GM10248 (cell line): ENCODE measurements at regions of chr11 and their contacts with region 1.

Region 1: DNA sequence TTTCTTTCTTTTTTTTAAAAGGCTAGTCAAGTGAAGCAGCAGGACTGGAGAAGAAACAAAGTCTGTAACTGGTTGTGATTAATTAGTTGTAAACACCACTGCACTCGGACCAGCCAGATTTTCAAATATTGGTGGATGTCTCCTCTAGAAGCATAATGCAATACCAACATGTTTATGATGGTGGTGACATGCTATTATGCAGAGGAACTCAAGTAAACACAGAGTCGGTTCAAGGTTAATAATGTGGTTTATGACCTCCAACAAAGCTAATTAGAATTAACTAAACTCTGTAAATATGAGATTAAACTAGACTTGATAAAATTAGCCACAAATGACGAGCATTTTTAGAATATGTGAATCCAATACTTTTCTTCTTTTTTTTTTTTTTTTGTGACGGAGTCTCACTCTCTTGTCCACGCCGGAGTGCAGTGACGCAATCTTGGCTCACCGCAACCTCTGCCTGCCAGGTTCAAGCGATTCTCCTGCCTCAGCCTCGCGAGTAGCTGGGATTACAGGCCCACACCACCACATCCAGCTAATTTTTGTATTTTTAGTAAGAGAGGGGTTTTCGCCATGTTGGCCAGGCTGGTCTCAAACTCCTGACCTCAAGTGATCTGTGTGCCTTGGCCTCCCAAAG is 11.8 kb upstream of the AGBL2 start:
- DNase-seq: no peak
- CTCF ChIP-seq: no peak

Region 2: DNA sequence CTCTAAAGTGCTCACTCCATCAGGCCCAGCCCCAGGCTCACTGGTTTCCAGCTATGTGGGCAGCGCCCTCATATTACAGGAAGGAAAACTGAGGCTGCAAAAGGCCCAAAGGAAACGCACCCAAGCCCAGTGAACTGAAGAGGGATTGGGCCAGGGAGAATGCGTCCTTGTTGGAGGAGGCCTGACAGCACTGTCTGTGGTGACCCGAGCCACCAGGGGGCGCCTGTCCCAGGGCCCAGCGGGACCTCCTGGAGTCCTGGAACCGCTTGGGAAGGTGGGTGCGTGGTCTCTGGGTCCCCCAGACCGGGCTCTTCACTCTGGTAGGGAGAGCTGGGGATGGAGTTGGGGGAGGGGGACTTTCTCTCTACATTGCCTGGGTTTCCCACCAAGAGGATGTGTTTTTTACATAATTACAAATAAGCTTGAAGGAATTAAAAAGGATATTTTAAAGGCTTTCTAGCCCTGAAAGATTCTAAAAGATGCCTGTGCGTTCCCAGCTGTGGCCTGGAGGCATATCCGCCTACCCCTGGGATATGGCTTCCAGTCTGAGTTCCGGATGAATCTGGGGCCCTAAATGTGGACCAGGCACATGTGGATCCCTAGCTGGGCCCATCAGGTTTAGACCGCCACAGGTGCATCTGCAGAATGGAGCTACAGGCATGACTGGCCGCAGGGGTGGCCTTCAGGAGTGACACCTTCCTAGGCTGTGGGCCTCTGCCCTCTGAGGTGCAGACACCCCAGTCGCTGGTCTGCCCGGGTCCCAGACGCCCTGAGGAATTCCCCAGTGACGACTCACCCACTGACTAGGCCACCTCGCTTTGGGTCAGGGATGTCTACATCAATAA is 352.9 kb before region 1 on chr11:
- CTCF ChIA-PET with region 1: no interaction called
- POLR2A ChIA-PET with region 1: no interaction called
- DNase-seq: peak; percentile 84
- CTCF ChIP-seq: peak; percentile 98

Region 3: GRCh38 chr11:47578524-47579460 is 148.2 kb before region 1 on chr11 and contains the starts of genes KBTBD4 and NDUFS3:
- CTCF ChIA-PET with region 1: no interaction called
- POLR2A ChIA-PET with region 1: no interaction called
- DNase-seq: peak; percentile 93
- CTCF ChIP-seq: no peak

Region 4: DNA sequence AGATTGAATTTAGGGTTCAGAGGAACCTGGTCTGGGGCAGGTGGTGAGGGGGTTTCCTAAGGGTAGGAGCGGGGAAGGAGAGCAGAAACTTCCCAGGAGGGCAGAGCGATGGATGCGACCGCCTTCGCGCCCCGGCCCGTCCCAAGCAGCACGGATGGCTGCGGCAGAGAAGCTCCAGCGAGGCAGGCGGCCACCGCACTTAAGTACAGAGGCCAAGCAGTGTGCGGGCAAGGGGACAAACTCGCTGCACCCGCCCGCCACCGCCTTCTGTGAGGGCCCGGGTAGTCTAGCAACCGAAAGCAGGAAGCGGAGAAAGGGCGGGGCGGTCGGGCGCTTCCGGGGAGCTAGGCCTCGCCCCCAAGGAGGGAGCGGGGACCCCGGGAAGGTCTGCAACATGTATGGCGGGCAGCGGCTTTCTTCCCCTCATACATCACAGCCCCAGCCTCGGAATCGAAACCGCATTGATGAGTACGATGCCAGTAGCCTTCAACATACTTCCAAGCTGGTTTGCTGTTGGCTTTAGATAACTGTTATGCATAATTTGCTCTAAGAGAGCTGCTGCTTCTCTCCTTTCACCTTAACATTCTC is 11.8 kb before region 1 on chr11 and contains the start of gene AGBL2:
- CTCF ChIA-PET with region 1: interaction called, 14 read pairs
- POLR2A ChIA-PET with region 1: no interaction called
- DNase-seq: peak; percentile 93
- CTCF ChIP-seq: no peak